PC-9 (cell line): ENCODE measurements at regions of chr5 and their contacts with region 1.

Region 1: GRCh38 chr5:134140530-134141201 is 26.2 kb downstream of the TCF7 start:
- DNase-seq: peak; percentile 72 to 73
- H3K4me3 ChIP-seq: no peak overlapping the region
- H3K27ac ChIP-seq: no peak overlapping the region
- H3K4me1 ChIP-seq: peaks cover 21% of the 10 kb centered on the region
- H3K27me3 ChIP-seq: no peaks in the 10 kb centered on the region
- CTCF ChIP-seq: peak; percentile 83

Region 2: GRCh38 chr5:134026521-134027268 is 114.0 kb before region 1 on chr5:
- CTCF ChIA-PET with region 1: interaction called, 18 read pairs
- POLR2A ChIA-PET with region 1: no interaction called
- intact Hi-C with region 1: no loop called
- DNase-seq: peak; percentile 60 to 80
- H3K4me3 ChIP-seq: no peak overlapping the region
- H3K27ac ChIP-seq: no peak overlapping the region
- H3K4me1 ChIP-seq: peaks cover 68% of the 10 kb centered on the region
- H3K27me3 ChIP-seq: no peaks in the 10 kb centered on the region
- CTCF ChIP-seq: peak; percentile 75

Region 3: GRCh38 chr5:134082264-134082992 is 58.2 kb before region 1 on chr5:
- CTCF ChIA-PET with region 1: no interaction called
- POLR2A ChIA-PET with region 1: no interaction called
- intact Hi-C with region 1: no loop called
- DNase-seq: no peak
- H3K4me3 ChIP-seq: no peak overlapping the region
- H3K27ac ChIP-seq: no peak overlapping the region
- H3K4me1 ChIP-seq: no peaks in the 10 kb centered on the region
- H3K27me3 ChIP-seq: no peaks in the 10 kb centered on the region
- CTCF ChIP-seq: no peak

Region 4: DNA sequence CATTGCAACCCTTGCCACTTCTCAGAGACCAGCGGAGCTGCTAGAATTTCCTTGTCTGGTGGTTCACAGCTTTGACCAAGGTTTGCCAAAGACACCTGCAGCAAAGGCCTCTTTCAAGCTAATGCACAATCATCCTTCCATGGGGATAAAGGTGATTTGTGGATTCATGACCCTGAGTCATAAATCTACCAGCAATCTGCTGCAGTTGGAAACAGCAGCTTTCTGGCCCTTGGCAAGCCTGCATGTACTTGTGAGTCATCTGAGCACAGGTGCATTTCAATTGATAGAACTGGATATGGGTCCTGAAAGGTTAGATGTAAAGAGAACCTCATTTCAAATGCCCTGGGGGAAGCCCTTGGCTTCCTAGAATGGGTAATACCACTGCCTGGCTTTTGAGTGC is 47.8 kb before region 1 on chr5:
- CTCF ChIA-PET with region 1: interaction called, 16 read pairs
- POLR2A ChIA-PET with region 1: no interaction called
- intact Hi-C with region 1: no loop called
- DNase-seq: peak; percentile 70 to 99
- H3K4me3 ChIP-seq: peak overlapping the region; percentile 13; the same call in 1 of the 2 replicates
- H3K27ac ChIP-seq: peak overlapping the region; percentile 93
- H3K4me1 ChIP-seq: peaks cover 47% of the 10 kb centered on the region
- H3K27me3 ChIP-seq: no peaks in the 10 kb centered on the region
- CTCF ChIP-seq: no peak

Region 5: GRCh38 chr5:134101686-134102439 is 38.8 kb before region 1 on chr5:
- CTCF ChIA-PET with region 1: interaction called, 8 read pairs
- POLR2A ChIA-PET with region 1: no interaction called
- intact Hi-C with region 1: loop called (anchors 2 kb)
- DNase-seq: peak in 1 of 2 experiments; percentile 54
- H3K4me3 ChIP-seq: no peak overlapping the region
- H3K27ac ChIP-seq: no peak overlapping the region
- H3K4me1 ChIP-seq: peaks cover 18% of the 10 kb centered on the region
- H3K27me3 ChIP-seq: no peaks in the 10 kb centered on the region
- CTCF ChIP-seq: peak; percentile 82

Region 6: GRCh38 chr5:134477462-134478250 is 337.0 kb after region 1 on chr5:
- CTCF ChIA-PET with region 1: no interaction called
- POLR2A ChIA-PET with region 1: no interaction called
- intact Hi-C with region 1: no loop called
- DNase-seq: peak in 1 of 2 experiments; percentile 50
- H3K4me3 ChIP-seq: no peak overlapping the region
- H3K27ac ChIP-seq: no peak overlapping the region
- H3K4me1 ChIP-seq: no peaks in the 10 kb centered on the region; the same call in 1 of the 2 replicates
- H3K27me3 ChIP-seq: no peaks in the 10 kb centered on the region
- CTCF ChIP-seq: no peak